Naive thymus-derived CD4-positive, alpha-beta T cell (primary cell): ENCODE measurements at regions of chr11 and their contacts with region 1.

Region 1: GRCh38 chr11:87037450-87038234 is at the start of gene TMEM135:
- DNase-seq: peak; percentile 82 to 96 (median 90)
- ATAC-seq: peak; percentile 99
- H3K4me3 ChIP-seq: peak within 1 kb of the TSS; percentile 97
- H3K4me3 Mint-ChIP-seq: peak within 1 kb of the TSS; percentile 92 to 99 (median 97)
- H3K27ac ChIP-seq: peak within 1 kb of the TSS; percentile 69
- H3K27ac Mint-ChIP-seq: peak within 1 kb of the TSS; percentile 77 to 96 (median 93)
- H3K4me1 ChIP-seq: peaks cover 11 to 15% of the 10 kb centered on the region in 2 donors
- H3K4me1 Mint-ChIP-seq: peaks cover 37 to 68% (median 58%) of the 10 kb centered on the region in 7 donors
- H3K27me3 ChIP-seq: no peaks in the 10 kb centered on the region
- H3K27me3 Mint-ChIP-seq: peaks cover 0 to 19% (median 0%) of the 10 kb centered on the region in 5 donors
- total RNA-seq, gene TMEM135: 8.3 to 26.8 (median 12.8) TPM

Region 2: GRCh38 chr11:85759915-85760314 is 1277.7 kb before region 1 on chr11:
- CTCF ChIA-PET with region 1: no interaction called
- POLR2A ChIA-PET with region 1: no interaction called
- intact Hi-C with region 1: loop called in 1 of 2 experiments (anchors 10 kb)
- DNase-seq: no peak
- ATAC-seq: no peak
- H3K4me3 ChIP-seq: no peak overlapping the region
- H3K4me3 Mint-ChIP-seq: peak overlapping the region in 3 of 10 donors; percentile 2 to 18 (median 4)
- H3K27ac ChIP-seq: no peak overlapping the region
- H3K27ac Mint-ChIP-seq: peak overlapping the region in 2 of 9 donors; percentile 0 to 23
- H3K4me1 ChIP-seq: peaks cover 49 to 51% of the 10 kb centered on the region in 2 donors
- H3K4me1 Mint-ChIP-seq: peaks cover 40 to 92% (median 73%) of the 10 kb centered on the region in 7 donors
- H3K27me3 ChIP-seq: no peaks in the 10 kb centered on the region
- H3K27me3 Mint-ChIP-seq: no peaks in the 10 kb centered on the region

Region 3: DNA sequence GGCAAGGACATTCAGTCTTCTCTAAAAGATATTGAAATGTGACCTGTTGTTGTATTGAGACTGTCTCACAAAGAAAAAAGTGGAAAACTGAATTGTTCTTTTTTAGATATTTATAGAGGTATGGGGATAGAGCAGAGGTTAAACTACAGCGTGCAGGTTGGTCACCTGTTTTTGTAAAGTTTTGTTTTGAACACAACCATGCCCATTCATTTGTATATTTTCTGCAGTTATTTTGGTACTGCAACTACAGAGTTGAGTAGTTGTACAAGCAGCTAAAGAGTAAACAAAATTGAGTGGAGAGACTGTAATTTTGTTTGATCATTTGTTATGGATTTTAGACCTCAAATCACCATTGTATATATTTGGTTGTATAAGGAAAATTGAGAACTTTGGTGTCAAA is 781.7 kb before region 1 on chr11:
- CTCF ChIA-PET with region 1: no interaction called
- POLR2A ChIA-PET with region 1: no interaction called
- intact Hi-C with region 1: loop called in 1 of 2 experiments (anchors 5 kb)
- DNase-seq: no peak
- ATAC-seq: no peak
- H3K4me3 ChIP-seq: no peak overlapping the region
- H3K4me3 Mint-ChIP-seq: no peak overlapping the region
- H3K27ac ChIP-seq: no peak overlapping the region
- H3K27ac Mint-ChIP-seq: peak overlapping the region in 1 of 9 donors; percentile 21
- H3K4me1 ChIP-seq: peaks cover 0 to 4% of the 10 kb centered on the region in 2 donors
- H3K4me1 Mint-ChIP-seq: peaks cover 0 to 30% (median 24%) of the 10 kb centered on the region in 7 donors
- H3K27me3 ChIP-seq: no peaks in the 10 kb centered on the region
- H3K27me3 Mint-ChIP-seq: no peaks in the 10 kb centered on the region

Region 4: GRCh38 chr11:86671682-86672621 is 365.7 kb before region 1 on chr11 and contains the start of gene ME3:
- CTCF ChIA-PET with region 1: no interaction called
- POLR2A ChIA-PET with region 1: no interaction called
- intact Hi-C with region 1: loop called in 1 of 2 experiments (anchors 5 kb)
- DNase-seq: peak; percentile 35 to 69 (median 54)
- ATAC-seq: peak; percentile 88
- H3K4me3 ChIP-seq: peak within 1 kb of the TSS; percentile 68
- H3K4me3 Mint-ChIP-seq: peak within 1 kb of the TSS; percentile 62 to 89 (median 84)
- H3K27ac ChIP-seq: peak within 1 kb of the TSS; percentile 54
- H3K27ac Mint-ChIP-seq: peak within 1 kb of the TSS in 7 of 9 donors; percentile 17 to 80 (median 62)
- H3K4me1 ChIP-seq: no peaks in the 10 kb centered on the region
- H3K4me1 Mint-ChIP-seq: peaks cover 10 to 29% (median 16%) of the 10 kb centered on the region in 7 donors
- H3K27me3 ChIP-seq: no peaks in the 10 kb centered on the region
- H3K27me3 Mint-ChIP-seq: peaks cover 5 to 39% (median 10%) of the 10 kb centered on the region in 5 donors
- total RNA-seq, gene ME3: 2.2 to 13.7 (median 7.0) TPM

Region 5: DNA sequence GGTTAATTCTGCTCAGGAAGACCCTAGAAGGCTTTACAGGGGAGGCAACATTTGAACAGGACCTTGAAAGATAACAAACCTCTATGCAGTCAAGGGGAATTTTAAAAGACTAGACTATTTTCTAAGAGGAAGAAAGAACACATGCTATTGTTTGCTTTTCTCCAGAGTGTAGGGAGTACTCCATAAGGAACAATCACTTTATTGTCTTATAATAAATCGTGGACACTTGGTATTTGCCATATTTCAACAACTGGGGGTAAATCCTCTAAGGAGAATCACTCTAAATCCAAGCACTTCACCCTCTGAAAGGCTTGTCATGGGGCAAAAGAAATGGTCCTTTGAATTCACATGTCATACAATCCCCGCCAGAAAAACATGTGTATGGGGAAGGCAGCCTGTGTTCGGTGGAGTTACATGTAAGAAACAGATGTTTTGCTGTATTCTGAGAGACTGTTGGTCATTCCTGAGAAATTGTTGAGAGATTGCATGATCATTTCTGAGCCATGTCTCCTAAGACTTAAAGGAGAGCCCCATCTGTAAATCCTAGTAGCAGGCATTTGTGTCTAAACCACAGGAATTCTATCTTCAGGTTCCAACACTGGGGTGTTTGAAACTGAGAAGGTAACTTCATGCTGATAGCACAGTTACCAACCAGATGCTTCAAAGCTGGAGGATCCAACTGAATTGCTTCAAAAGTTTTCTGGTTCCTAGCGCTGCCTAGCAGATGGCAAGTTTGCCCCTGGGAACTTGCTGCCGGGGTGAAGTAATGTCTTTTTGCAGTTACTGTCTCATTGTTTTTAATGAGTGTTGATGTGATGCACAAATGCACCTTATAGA is 149.3 kb before region 1 on chr11:
- CTCF ChIA-PET with region 1: no interaction called
- POLR2A ChIA-PET with region 1: no interaction called
- intact Hi-C with region 1: no loop called
- DNase-seq: no peak
- ATAC-seq: no peak
- H3K4me3 ChIP-seq: no peak overlapping the region
- H3K4me3 Mint-ChIP-seq: no peak overlapping the region
- H3K27ac ChIP-seq: no peak overlapping the region
- H3K27ac Mint-ChIP-seq: no peak overlapping the region
- H3K4me1 ChIP-seq: no peaks in the 10 kb centered on the region
- H3K4me1 Mint-ChIP-seq: no peaks in the 10 kb centered on the region
- H3K27me3 ChIP-seq: no peaks in the 10 kb centered on the region
- H3K27me3 Mint-ChIP-seq: peaks cover 5 to 27% (median 15%) of the 10 kb centered on the region in 5 donors

Region 6: GRCh38 chr11:87081358-87081757 is 43.7 kb after region 1 on chr11:
- CTCF ChIA-PET with region 1: interaction called, 3 read pairs
- POLR2A ChIA-PET with region 1: no interaction called
- intact Hi-C with region 1: loop called in 1 of 2 experiments (anchors 1 kb)
- DNase-seq: peak in 5 of 9 donors; percentile 3 to 25 (median 20)
- ATAC-seq: no peak
- H3K4me3 ChIP-seq: peak overlapping the region; percentile 6
- H3K4me3 Mint-ChIP-seq: peak overlapping the region; percentile 56 to 89 (median 85)
- H3K27ac ChIP-seq: peak overlapping the region; percentile 14
- H3K27ac Mint-ChIP-seq: peak overlapping the region; percentile 83 to 98 (median 88)
- H3K4me1 ChIP-seq: no peaks in the 10 kb centered on the region
- H3K4me1 Mint-ChIP-seq: peaks cover 16 to 35% (median 29%) of the 10 kb centered on the region in 7 donors
- H3K27me3 ChIP-seq: no peaks in the 10 kb centered on the region
- H3K27me3 Mint-ChIP-seq: no peaks in the 10 kb centered on the region

Region 7: GRCh38 chr11:87097582-87097981 is 59.9 kb after region 1 on chr11:
- CTCF ChIA-PET with region 1: no interaction called
- POLR2A ChIA-PET with region 1: no interaction called
- intact Hi-C with region 1: loop called in 1 of 2 experiments (anchors 5 kb)
- DNase-seq: peak in 6 of 9 donors; percentile 13 to 38 (median 32)
- ATAC-seq: peak; percentile 82
- H3K4me3 ChIP-seq: no peak overlapping the region
- H3K4me3 Mint-ChIP-seq: peak overlapping the region in 4 of 10 donors; percentile 2 to 53 (median 16)
- H3K27ac ChIP-seq: no peak overlapping the region
- H3K27ac Mint-ChIP-seq: peak overlapping the region in 2 of 9 donors; percentile 4 to 44
- H3K4me1 ChIP-seq: no peaks in the 10 kb centered on the region
- H3K4me1 Mint-ChIP-seq: peaks cover 1 to 9% (median 8%) of the 10 kb centered on the region in 7 donors
- H3K27me3 ChIP-seq: no peaks in the 10 kb centered on the region
- H3K27me3 Mint-ChIP-seq: no peaks in the 10 kb centered on the region

Region 8: DNA sequence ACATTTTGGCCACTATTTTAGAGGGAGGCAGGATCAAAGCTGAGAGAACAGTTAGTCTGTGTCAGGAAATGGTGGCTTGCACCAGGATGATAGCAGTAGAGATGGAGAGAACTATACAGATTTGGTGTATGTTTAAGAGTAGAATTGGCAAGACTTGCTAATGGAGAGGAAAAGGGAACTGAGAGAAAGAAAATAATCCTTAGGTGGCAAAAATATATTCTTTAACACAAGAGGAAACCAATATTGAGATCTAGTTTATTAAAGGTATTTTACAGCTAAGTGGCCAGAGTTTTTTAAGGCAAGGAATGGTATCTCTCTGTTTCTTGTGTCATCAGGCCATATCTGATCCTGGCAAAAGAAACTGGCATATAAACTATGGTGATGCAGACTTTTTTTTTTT is 278.8 kb after region 1 on chr11:
- CTCF ChIA-PET with region 1: no interaction called
- POLR2A ChIA-PET with region 1: no interaction called
- intact Hi-C with region 1: no loop called
- DNase-seq: no peak
- ATAC-seq: no peak
- H3K4me3 ChIP-seq: no peak overlapping the region
- H3K4me3 Mint-ChIP-seq: no peak overlapping the region
- H3K27ac ChIP-seq: no peak overlapping the region
- H3K27ac Mint-ChIP-seq: no peak overlapping the region
- H3K4me1 ChIP-seq: no peaks in the 10 kb centered on the region
- H3K4me1 Mint-ChIP-seq: no peaks in the 10 kb centered on the region
- H3K27me3 ChIP-seq: no peaks in the 10 kb centered on the region
- H3K27me3 Mint-ChIP-seq: no peaks in the 10 kb centered on the region